Dorsolateral prefrontal cortex (tissue), 120 donors: ENCODE measurements at regions of chr17 and their contacts with region 1.

Region 1: GRCh38 chr17:48678141-48678971 is 44.0 kb downstream of the PRAC1 start:
- DNase-seq: peak in 9 of 10 donors; percentile 24 to 74 (median 38)
- H3K4me3 ChIP-seq: peak overlapping the region in 32 of 59 donors; percentile 4 to 58 (median 29)
- H3K27ac ChIP-seq: no peak overlapping the region
- H3K27me3 ChIP-seq: peaks cover 0 to 83% (median 38%) of the 10 kb centered on the region in 45 donors
- CTCF ChIP-seq: peak; percentile 63 to 98 (median 90)

Region 2: GRCh38 chr17:48618256-48618897 is 60.0 kb before region 1 on chr17:
- intact Hi-C with region 1: no loop called
- DNase-seq: peak; percentile 78 to 91 (median 82)
- H3K4me3 ChIP-seq: no peak overlapping the region
- H3K27ac ChIP-seq: no peak overlapping the region
- H3K27me3 ChIP-seq: peaks cover 31 to 100% (median 98%) of the 10 kb centered on the region in 45 donors
- CTCF ChIP-seq: peak; percentile 56 to 100 (median 98)

Region 3: DNA sequence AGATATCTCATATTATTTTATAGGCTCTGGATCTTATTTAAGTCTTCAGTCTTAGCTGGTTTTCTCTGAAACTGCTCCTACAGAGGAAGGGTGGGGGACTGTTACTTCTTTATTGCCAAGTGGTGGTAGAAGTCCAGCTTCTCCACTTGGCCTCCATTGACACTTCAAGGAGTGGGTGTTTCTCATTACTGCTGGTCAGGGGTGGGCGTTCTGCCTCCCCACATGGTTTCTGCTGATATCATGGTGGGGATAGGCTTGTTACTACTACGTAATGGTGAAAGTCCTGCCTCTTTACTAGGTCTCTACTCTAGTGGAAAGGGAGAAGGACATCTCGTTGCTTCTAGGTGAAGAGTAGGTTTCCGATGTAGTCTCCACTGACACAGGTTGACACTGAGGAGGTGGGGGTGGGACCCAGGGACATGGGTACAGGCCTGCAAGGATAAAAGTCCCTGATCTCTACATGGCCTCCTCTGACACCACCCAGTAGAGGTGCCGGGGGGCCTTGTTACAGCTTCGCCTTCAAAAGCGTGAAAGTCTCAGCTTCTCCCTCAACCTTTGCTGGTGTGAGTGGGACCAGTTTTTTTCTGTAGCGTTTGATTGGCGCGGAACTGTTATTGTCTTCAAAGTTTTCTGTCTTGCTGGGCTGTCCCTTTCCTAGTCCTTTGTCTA is 23.6 kb after region 1 on chr17:
- intact Hi-C with region 1: no loop called
- DNase-seq: no peak
- H3K4me3 ChIP-seq: no peak overlapping the region
- H3K27ac ChIP-seq: no peak overlapping the region
- H3K27me3 ChIP-seq: peaks cover 0 to 100% (median 60%) of the 10 kb centered on the region in 45 donors
- CTCF ChIP-seq: no peak

Region 4: GRCh38 chr17:48724251-48725003 is 46.1 kb after region 1 on chr17:
- intact Hi-C with region 1: no loop called
- DNase-seq: peak; percentile 57 to 83 (median 69)
- H3K4me3 ChIP-seq: peak overlapping the region in 6 of 59 donors; percentile 8 to 35 (median 16)
- H3K27ac ChIP-seq: no peak overlapping the region
- H3K27me3 ChIP-seq: peaks cover 28 to 100% (median 100%) of the 10 kb centered on the region in 45 donors
- CTCF ChIP-seq: peak; percentile 17 to 79 (median 61)

Region 5: DNA sequence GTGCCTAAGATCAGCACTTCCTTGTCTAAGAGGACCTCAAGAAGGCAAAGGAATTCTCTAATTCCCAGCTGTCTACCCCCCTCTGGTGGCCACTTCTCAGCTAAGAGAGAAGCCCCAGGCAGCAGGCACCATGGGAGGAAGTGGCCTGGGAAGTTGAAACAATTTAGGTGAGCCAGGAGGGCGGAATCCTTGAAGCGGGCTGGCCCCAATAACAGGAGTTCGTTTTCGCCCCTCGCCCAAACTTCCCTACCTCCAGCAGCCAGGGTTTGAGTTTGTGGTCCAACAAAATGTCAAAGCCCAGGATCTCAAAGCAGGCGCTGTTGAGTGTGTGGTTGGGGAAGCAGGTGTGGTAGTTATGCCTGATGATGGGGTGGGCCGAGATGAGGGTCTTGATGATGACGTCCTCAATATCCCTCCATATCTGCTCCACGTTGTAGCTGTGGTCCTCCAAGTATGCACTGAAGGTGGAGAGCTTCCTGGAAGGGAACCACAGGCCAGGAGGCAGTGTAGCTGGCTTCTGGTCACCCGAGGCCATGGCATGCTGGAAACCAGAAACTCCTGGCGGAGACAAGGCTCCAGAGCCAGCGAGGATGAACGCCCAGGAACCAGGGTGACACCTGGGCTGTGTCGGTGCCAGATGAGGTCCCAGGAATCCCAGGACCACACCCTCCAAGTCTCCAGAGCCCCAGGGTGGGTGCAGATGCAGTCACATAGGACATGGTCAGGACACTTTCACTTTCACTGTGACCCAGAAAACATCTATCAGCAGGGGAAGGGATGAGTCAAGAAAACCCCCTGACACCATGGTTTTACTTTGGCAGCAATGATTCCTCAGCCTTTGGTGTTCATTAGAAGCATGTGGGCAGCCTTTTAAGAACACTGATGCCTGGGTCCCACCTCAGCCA is 113.0 kb after region 1 on chr17:
- intact Hi-C with region 1: loop called (anchors 5 kb)
- DNase-seq: peak in 8 of 10 donors; percentile 11 to 51 (median 44)
- H3K4me3 ChIP-seq: no peak overlapping the region
- H3K27ac ChIP-seq: no peak overlapping the region
- H3K27me3 ChIP-seq: peaks cover 0 to 26% (median 0%) of the 10 kb centered on the region in 45 donors
- CTCF ChIP-seq: peak in 54 of 56 donors; percentile 29 to 75 (median 57)